CD4-positive, alpha-beta T cell (primary cell): ENCODE measurements at regions of chr1 and their contacts with region 1.

Region 1: GRCh38 chr1:161165742-161166668 is at the start of gene PPOX:
- DNase-seq: peak; percentile 85 to 97 (median 88)
- ATAC-seq: peak; percentile 90
- H3K4me3 ChIP-seq: peak within 1 kb of the TSS; percentile 95
- H3K4me3 Mint-ChIP-seq: peak within 1 kb of the TSS; percentile 93
- H3K27ac ChIP-seq: peak within 1 kb of the TSS; percentile 85 to 86
- H3K27ac Mint-ChIP-seq: peak within 1 kb of the TSS; percentile 98
- H3K4me1 ChIP-seq: peaks cover 43% of the 10 kb centered on the region
- H3K4me1 Mint-ChIP-seq: peaks cover 66% of the 10 kb centered on the region
- H3K27me3 ChIP-seq: no peaks in the 10 kb centered on the region
- H3K27me3 Mint-ChIP-seq: no peaks in the 10 kb centered on the region
- CTCF ChIP-seq: peak; percentile 61
- total RNA-seq, gene PPOX: 28.6 to 31.5 TPM

Region 2: DNA sequence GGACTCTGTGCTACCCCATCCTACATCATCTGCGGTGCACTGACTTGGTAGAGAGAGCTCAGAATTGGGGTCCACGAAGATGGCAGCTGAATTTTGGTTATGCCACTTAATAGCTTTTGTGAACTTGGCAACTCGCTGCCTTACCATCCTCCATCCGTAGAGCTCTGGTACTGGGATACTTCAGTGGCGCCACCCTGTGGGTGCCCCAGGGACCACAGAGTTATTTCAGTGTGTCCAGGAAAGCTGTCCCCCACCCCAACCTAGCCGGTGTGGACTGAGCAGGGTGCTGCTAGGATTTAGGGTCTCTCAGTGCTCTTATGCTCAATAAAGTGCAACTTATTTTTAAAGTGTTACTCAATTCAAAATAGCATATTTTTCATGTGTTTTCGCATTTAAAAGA is 111.2 kb before region 1 on chr1:
- CTCF ChIA-PET with region 1: no interaction called
- POLR2A ChIA-PET with region 1: no interaction called
- intact Hi-C with region 1: no loop called
- DNase-seq: peak in 1 of 14 experiments; percentile 33
- ATAC-seq: no peak
- H3K4me3 ChIP-seq: no peak overlapping the region
- H3K4me3 Mint-ChIP-seq: no peak overlapping the region
- H3K27ac ChIP-seq: peak overlapping the region in 1 of 2 donors; percentile 21
- H3K27ac Mint-ChIP-seq: no peak overlapping the region
- H3K4me1 ChIP-seq: peaks cover 35% of the 10 kb centered on the region
- H3K4me1 Mint-ChIP-seq: peaks cover 27% of the 10 kb centered on the region
- H3K27me3 ChIP-seq: no peaks in the 10 kb centered on the region
- H3K27me3 Mint-ChIP-seq: no peaks in the 10 kb centered on the region
- CTCF ChIP-seq: peak; percentile 32

Region 3: GRCh38 chr1:161132410-161133219 is 33.4 kb before region 1 on chr1 and contains the start of gene DEDD:
- CTCF ChIA-PET with region 1: interaction called, 8 read pairs
- POLR2A ChIA-PET with region 1: interaction called, 23 read pairs
- intact Hi-C with region 1: loop called (anchors 5 kb)
- DNase-seq: peak; percentile 80 to 97 (median 86)
- ATAC-seq: peak; percentile 95
- H3K4me3 ChIP-seq: peak within 1 kb of the TSS; percentile 98
- H3K4me3 Mint-ChIP-seq: no peak within 1 kb of the TSS
- H3K27ac ChIP-seq: peak within 1 kb of the TSS; percentile 79 to 94
- H3K27ac Mint-ChIP-seq: no peak within 1 kb of the TSS
- H3K4me1 ChIP-seq: peaks cover 46% of the 10 kb centered on the region
- H3K4me1 Mint-ChIP-seq: peaks cover 41% of the 10 kb centered on the region
- H3K27me3 ChIP-seq: no peaks in the 10 kb centered on the region
- H3K27me3 Mint-ChIP-seq: no peaks in the 10 kb centered on the region
- CTCF ChIP-seq: no peak
- total RNA-seq, gene DEDD: 35.5 to 36.6 TPM

Region 4: GRCh38 chr1:161177112-161177935 is 11.3 kb after region 1 on chr1 and contains the start of gene B4GALT3:
- CTCF ChIA-PET with region 1: interaction called, 18 read pairs
- POLR2A ChIA-PET with region 1: interaction called, 57 read pairs
- intact Hi-C with region 1: loop called in 1 of 2 experiments (anchors 2 kb)
- DNase-seq: peak; percentile 84 to 98 (median 93)
- ATAC-seq: peak; percentile 90
- H3K4me3 ChIP-seq: peak within 1 kb of the TSS; percentile 77
- H3K4me3 Mint-ChIP-seq: peak within 1 kb of the TSS; percentile 100
- H3K27ac ChIP-seq: peak within 1 kb of the TSS; percentile 82 to 89
- H3K27ac Mint-ChIP-seq: peak within 1 kb of the TSS; percentile 97
- H3K4me1 ChIP-seq: peaks cover 76% of the 10 kb centered on the region
- H3K4me1 Mint-ChIP-seq: peaks cover 72% of the 10 kb centered on the region
- H3K27me3 ChIP-seq: no peaks in the 10 kb centered on the region
- H3K27me3 Mint-ChIP-seq: no peaks in the 10 kb centered on the region
- CTCF ChIP-seq: no peak
- total RNA-seq, gene B4GALT3: 40.8 to 44.3 TPM

Region 5: GRCh38 chr1:161192476-161193465 is 26.8 kb after region 1 on chr1:
- CTCF ChIA-PET with region 1: interaction called, 7 read pairs
- POLR2A ChIA-PET with region 1: interaction called, 22 read pairs
- intact Hi-C with region 1: no loop called
- DNase-seq: peak; percentile 49 to 87 (median 66)
- ATAC-seq: peak; percentile 98
- H3K4me3 ChIP-seq: no peak overlapping the region
- H3K4me3 Mint-ChIP-seq: peak overlapping the region; percentile 1
- H3K27ac ChIP-seq: no peak overlapping the region
- H3K27ac Mint-ChIP-seq: peak overlapping the region; percentile 14
- H3K4me1 ChIP-seq: peaks cover 72% of the 10 kb centered on the region
- H3K4me1 Mint-ChIP-seq: peaks cover 44% of the 10 kb centered on the region
- H3K27me3 ChIP-seq: no peaks in the 10 kb centered on the region
- H3K27me3 Mint-ChIP-seq: no peaks in the 10 kb centered on the region
- CTCF ChIP-seq: peak; percentile 80

Region 6: GRCh38 chr1:161314201-161314981 is 148.4 kb after region 1 on chr1 and contains the start of gene SDHC:
- CTCF ChIA-PET with region 1: interaction called, 4 read pairs
- POLR2A ChIA-PET with region 1: interaction called, 14 read pairs
- intact Hi-C with region 1: no loop called
- DNase-seq: peak; percentile 84 to 96 (median 90)
- ATAC-seq: peak; percentile 98
- H3K4me3 ChIP-seq: peak within 1 kb of the TSS; percentile 90
- H3K4me3 Mint-ChIP-seq: peak within 1 kb of the TSS; percentile 98
- H3K27ac ChIP-seq: peak within 1 kb of the TSS; percentile 94 to 97
- H3K27ac Mint-ChIP-seq: peak within 1 kb of the TSS; percentile 100
- H3K4me1 ChIP-seq: peaks cover 18% of the 10 kb centered on the region
- H3K4me1 Mint-ChIP-seq: peaks cover 30% of the 10 kb centered on the region
- H3K27me3 ChIP-seq: no peaks in the 10 kb centered on the region
- H3K27me3 Mint-ChIP-seq: no peaks in the 10 kb centered on the region
- CTCF ChIP-seq: no peak
- total RNA-seq, gene SDHC: 33.0 to 37.2 TPM

Region 7: GRCh38 chr1:161915051-161915503 is 749.1 kb after region 1 on chr1:
- CTCF ChIA-PET with region 1: no interaction called
- POLR2A ChIA-PET with region 1: no interaction called
- intact Hi-C with region 1: no loop called
- DNase-seq: peak in 1 of 14 experiments; percentile 18
- ATAC-seq: no peak
- H3K4me3 ChIP-seq: no peak overlapping the region
- H3K4me3 Mint-ChIP-seq: no peak overlapping the region
- H3K27ac ChIP-seq: no peak overlapping the region
- H3K27ac Mint-ChIP-seq: no peak overlapping the region
- H3K4me1 ChIP-seq: no peaks in the 10 kb centered on the region
- H3K4me1 Mint-ChIP-seq: peaks cover 36% of the 10 kb centered on the region
- H3K27me3 ChIP-seq: no peaks in the 10 kb centered on the region
- H3K27me3 Mint-ChIP-seq: no peaks in the 10 kb centered on the region
- CTCF ChIP-seq: no peak